ENCODE measurements at regions of chr9 and their contacts with region 1.

Region 1: GRCh38 chr9:72592502-72593403 is 71.3 kb downstream of the TMC1 start:
- DNase-seq: peak; percentile 13
- H3K4me3 Mint-ChIP-seq: no peak overlapping the region
- H3K27ac Mint-ChIP-seq: no peak overlapping the region
- H3K4me1 Mint-ChIP-seq: peaks cover 46% of the 10 kb centered on the region
- H3K27me3 Mint-ChIP-seq: peaks cover 3% of the 10 kb centered on the region

Region 2: GRCh38 chr9:72280913-72281500 is 311.7 kb before region 1 on chr9:
- intact Hi-C with region 1: loop called (anchors 1 kb)
- DNase-seq: peak; percentile 52
- H3K4me3 Mint-ChIP-seq: no peak overlapping the region
- H3K27ac Mint-ChIP-seq: peak overlapping the region; percentile 36
- H3K4me1 Mint-ChIP-seq: no peaks in the 10 kb centered on the region
- H3K27me3 Mint-ChIP-seq: peaks cover 6% of the 10 kb centered on the region

Region 3: DNA sequence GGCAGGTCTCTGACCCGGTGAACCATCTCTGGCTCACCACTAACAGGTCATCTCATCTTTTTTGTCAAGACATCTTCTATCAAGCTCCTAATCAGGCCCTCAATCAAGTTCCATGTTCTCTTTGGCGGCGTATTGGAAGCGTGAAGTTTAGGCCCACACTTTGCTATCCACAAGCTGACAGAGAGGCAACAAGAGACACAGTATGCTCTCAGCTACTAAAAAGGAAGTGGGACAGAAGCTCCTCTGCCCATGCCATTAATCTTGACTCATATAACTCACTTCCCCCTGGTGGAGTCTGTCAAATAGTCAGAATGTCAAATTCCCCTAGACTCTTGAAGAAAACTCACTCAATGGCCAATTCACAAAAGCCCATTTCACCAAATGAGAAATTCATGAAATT is 148.9 kb before region 1 on chr9:
- intact Hi-C with region 1: loop called (anchors 1 kb)
- DNase-seq: peak; percentile 8
- H3K4me3 Mint-ChIP-seq: peak overlapping the region; percentile 20
- H3K27ac Mint-ChIP-seq: peak overlapping the region; percentile 85
- H3K4me1 Mint-ChIP-seq: peaks cover 43% of the 10 kb centered on the region
- H3K27me3 Mint-ChIP-seq: no peaks in the 10 kb centered on the region

Region 4: GRCh38 chr9:72540348-72540873 is 52.3 kb before region 1 on chr9:
- intact Hi-C with region 1: loop called (anchors 5 kb)
- DNase-seq: no peak
- H3K4me3 Mint-ChIP-seq: no peak overlapping the region
- H3K27ac Mint-ChIP-seq: no peak overlapping the region
- H3K4me1 Mint-ChIP-seq: peaks cover 36% of the 10 kb centered on the region
- H3K27me3 Mint-ChIP-seq: no peaks in the 10 kb centered on the region

Measured in activated T-helper 1 cell treated with anti-CD3 and anti-CD28 coated beads, Interleukin-12 subunit alpha, Interleukin-12 subunit beta, Interleukin-2, Interleukin-4 antibody, amounts not matched to agents 30 ng/mL and 10 ng/mL and 1 ng/mL, durations not matched to agents 14 hours and 24 hours and 36 hours (primary cell).